GM10248 (cell line): ENCODE measurements at regions of chr7 and their contacts with region 1.

Region 1: DNA sequence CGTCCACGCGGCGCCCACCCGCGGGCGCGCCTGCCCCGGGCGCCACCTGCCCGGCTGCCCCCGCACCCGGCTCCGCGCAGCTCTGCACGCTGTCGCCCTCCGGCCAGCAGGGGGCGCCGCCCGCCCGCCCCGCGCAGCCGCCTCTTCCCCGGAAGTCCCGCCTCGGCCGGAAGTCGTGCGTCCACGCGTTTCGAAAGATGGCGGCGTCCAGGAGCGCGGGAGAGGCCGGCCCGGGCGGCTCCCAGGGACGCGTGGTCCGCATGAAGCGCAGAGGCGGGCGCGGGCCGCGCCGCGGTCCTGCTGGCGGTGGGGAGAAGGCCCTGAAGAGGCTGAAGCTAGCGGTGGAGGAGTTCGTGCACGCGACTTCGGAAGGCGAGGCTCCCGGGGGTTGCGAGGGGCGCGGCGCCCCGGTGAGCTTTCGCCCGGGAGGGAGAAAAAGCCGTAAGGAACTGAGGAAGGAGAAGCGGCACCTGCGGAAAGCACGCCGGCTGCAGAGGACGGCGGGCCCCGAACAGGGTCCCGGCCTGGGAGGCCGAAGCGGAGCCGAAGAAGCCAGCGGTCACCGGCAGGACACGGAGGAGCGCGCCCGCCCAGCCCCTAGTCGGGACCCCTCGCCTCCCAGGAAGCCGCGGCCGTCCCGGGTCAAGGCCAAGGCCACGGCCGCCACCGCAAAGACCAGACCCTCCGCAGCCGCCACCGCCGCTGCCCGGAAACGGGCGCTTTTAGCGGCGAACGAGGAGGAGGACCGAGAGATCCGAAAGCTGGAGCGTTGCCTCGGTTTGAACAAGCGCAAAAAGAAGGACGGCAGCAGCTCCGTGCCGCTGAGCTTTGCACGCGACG is at the start of gene NOM1:
- DNase-seq: peak; percentile 98
- CTCF ChIP-seq: peak; percentile 95

Region 2: GRCh38 chr7:156680281-156680680 is 269.5 kb before region 1 on chr7:
- CTCF ChIA-PET with region 1: no interaction called
- POLR2A ChIA-PET with region 1: no interaction called
- DNase-seq: no peak
- CTCF ChIP-seq: no peak

Region 3: GRCh38 chr7:156892821-156893706 is 56.7 kb before region 1 on chr7 and contains the start of gene LMBR1:
- CTCF ChIA-PET with region 1: interaction called, 21 read pairs
- POLR2A ChIA-PET with region 1: interaction called, 5 read pairs
- DNase-seq: peak; percentile 98
- CTCF ChIP-seq: peak; percentile 24

Region 4: GRCh38 chr7:156920076-156920475 is 29.7 kb before region 1 on chr7:
- CTCF ChIA-PET with region 1: interaction called, 13 read pairs
- POLR2A ChIA-PET with region 1: no interaction called
- DNase-seq: no peak
- CTCF ChIP-seq: no peak

Region 5: DNA sequence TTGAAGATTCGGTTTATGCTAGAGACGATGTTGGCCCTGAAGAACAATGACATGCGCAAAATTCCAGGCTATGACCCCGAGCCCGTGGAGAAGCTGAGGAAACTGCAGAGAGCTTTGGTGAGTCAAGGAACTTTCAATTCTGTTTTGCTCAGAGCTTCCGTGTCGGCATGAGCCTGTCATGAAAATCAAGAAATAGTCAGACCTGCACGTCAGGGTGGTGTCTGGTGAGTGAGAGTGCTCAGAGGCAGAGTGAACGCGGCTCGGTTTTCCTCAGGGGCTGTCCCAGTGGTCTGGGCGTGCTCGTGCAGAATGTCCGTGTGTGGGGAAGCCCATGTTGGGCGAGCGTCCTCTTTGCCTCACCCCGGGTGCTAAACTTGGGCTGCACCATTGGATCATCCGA is 12.4 kb after region 1 on chr7:
- CTCF ChIA-PET with region 1: interaction called, 23 read pairs
- POLR2A ChIA-PET with region 1: interaction called, 3 read pairs
- DNase-seq: no peak
- CTCF ChIP-seq: no peak

Region 6: GRCh38 chr7:157000047-157000726 is 50.4 kb after region 1 on chr7:
- CTCF ChIA-PET with region 1: no interaction called
- POLR2A ChIA-PET with region 1: no interaction called
- DNase-seq: no peak
- CTCF ChIP-seq: no peak

Region 7: DNA sequence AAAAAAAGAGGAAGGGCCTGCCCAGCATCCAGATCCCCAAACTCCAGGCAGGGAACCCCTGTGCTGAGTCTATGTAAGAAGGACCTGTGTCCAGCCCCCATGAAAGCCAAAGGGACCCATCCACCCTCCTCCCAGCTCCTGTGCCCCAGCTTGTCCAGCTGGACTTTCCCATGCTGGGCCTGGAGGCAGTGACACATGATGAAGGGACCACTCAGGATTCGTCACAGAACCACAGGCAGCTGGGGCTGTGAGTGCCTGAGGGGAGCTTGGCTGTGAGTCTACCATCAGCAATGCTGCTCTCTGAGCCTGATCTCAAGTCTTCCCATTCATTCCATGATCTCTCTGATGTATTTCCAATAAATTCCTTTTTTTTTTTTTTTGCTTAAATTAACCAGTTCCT is 96.9 kb after region 1 on chr7:
- CTCF ChIA-PET with region 1: no interaction called
- POLR2A ChIA-PET with region 1: no interaction called
- DNase-seq: no peak
- CTCF ChIP-seq: no peak

Region 8: GRCh38 chr7:157078081-157078611 is 128.4 kb after region 1 on chr7:
- CTCF ChIA-PET with region 1: no interaction called
- POLR2A ChIA-PET with region 1: no interaction called
- DNase-seq: no peak
- CTCF ChIP-seq: no peak

Region 9: DNA sequence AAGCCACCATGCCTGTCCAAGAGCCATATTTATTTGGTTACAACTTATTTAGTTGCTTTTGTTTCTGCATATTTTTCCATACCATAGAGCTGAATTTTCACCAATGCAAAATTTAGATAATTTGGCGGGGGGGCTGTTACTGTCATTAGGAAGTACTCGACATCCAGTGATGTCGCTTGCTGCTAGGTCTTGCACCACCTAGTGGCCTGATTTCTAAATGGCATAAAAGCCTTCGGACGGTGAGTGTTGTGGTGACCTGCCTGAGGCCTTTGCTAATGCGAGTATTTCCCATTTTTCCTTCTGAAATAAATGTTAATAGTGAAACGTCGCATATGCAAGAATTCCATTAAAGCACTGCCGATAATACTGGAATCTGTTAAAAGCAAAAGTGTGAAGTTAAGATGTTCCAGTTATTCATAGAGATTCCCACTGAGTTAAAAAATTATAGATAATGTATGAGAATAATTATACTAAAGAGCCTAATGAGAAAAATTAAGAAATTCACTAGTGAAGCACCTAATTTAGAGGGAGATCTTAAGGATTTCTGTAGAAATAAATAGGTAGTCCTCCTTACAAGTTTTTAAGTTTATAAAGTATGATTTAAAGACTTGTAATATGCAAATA is 301.0 kb after region 1 on chr7:
- CTCF ChIA-PET with region 1: interaction called, 9 read pairs
- POLR2A ChIA-PET with region 1: interaction called, 10 read pairs
- DNase-seq: peak; percentile 65
- CTCF ChIP-seq: peak; percentile 76